Activated T-helper 1 cell treated with anti-CD3 and anti-CD28 coated beads, Interleukin-12 subunit alpha, Interleukin-12 subunit beta, Interleukin-2, Interleukin-4 antibody, amounts not matched to agents 30 ng/mL and 10 ng/mL and 1 ng/mL, durations not matched to agents 14 hours and 24 hours and 36 hours (primary cell): ENCODE measurements at regions of chr4 and their contacts with region 1.

Region 1: DNA sequence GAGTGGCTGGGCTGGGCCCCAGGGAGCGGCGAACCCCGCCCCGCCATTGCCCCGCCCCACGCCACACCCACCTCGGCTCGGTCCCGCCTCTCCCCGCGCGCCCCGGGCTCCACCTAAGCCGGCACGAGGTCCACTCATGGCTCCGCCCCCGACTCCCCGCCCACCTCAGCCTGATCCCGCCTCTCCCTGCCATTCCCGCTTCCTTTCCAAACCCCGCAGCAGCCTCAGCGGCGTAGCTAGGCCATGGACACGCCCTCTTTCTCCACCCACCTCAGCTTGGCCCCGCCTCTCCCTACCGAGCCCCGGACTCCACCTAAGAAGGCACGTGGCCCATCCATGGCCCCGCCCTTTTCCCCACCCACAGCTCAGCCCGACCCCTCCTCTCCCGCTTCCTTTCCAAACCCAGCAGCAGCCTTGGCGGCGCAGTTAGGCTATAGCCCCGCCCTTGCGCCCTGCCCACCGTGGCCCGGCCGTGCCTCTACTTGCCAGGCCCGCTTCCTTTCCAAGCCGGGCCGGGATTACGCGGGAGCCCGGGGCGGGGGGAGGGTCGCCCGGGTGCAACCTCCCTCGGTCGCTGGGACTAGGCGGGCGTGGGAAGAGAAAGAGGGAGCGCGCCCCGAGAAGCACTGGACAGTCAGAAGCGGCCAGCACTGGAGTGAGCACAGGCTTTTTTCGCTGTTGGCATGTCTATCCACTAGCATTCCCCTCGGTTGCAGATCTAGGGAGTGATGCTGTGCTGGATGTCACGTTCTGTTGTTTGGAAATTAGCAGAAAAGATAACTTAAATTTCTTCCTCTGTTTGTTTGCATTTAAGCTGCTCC is at the start of gene RELL1:
- DNase-seq: peak; percentile 99
- H3K4me3 Mint-ChIP-seq: peak within 1 kb of the TSS; percentile 96
- H3K27ac Mint-ChIP-seq: peak within 1 kb of the TSS; percentile 98
- H3K4me1 Mint-ChIP-seq: peaks cover 40% of the 10 kb centered on the region
- H3K27me3 Mint-ChIP-seq: peaks cover 7% of the 10 kb centered on the region
- total RNA-seq, gene RELL1: 21.0 and 21.4 TPM in 2 replicates

Region 2: DNA sequence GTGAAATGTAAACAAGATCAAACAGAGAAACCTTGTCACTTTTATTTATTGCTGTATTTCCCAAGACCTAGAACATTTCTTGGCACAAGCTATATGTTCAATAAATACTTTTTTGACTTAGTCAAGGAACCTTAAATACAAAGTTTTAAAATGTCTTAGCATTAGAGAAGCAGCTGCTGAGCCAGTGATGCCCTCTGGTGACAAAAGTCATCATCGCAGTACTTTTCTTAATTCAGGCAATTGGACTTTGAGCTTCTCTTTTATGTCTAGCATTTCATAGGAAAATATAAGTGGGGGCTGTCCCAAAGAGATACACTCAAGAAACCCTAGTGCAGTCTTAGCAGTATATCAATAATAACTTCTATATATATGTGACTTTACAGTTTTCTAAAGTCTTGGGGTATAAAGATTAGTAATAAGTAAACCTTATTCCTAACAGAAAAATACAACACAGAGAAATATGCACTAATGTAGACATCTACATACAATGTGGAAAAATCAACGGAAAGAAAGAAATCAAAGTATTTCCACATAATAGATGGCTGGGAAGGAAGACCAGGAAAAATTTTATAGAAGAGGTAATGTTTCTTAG is 1286.7 kb before region 1 on chr4:
- intact Hi-C with region 1: loop called (anchors 10 kb)
- DNase-seq: peak; percentile 15
- H3K4me3 Mint-ChIP-seq: no peak overlapping the region
- H3K27ac Mint-ChIP-seq: no peak overlapping the region
- H3K4me1 Mint-ChIP-seq: peaks cover 23% of the 10 kb centered on the region
- H3K27me3 Mint-ChIP-seq: peaks cover 9% of the 10 kb centered on the region

Region 3: DNA sequence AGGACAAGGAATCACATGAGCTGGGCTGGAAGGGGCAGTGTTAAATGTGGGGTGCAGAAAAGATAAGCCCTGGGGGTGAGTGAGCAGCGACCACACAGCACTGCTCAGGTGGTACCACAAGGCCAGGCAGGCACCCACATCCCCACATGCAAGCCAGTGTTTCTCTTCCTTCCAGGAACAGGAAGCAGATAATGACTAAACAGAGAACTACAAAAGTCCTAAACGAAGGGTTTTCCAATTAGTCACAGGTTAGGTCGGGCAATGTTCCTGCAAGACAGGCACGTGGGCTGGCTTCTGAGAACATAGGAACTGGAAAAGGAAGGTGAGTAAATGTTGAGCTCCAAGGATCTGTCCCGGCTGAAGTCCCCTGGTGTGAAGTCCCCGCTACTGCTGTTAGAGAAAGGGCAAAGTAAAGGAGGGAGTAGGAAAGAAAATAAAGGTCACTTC is 19.9 kb before region 1 on chr4:
- intact Hi-C with region 1: loop called (anchors 2 kb)
- DNase-seq: peak; percentile 10
- H3K4me3 Mint-ChIP-seq: peak overlapping the region; percentile 19
- H3K27ac Mint-ChIP-seq: peak overlapping the region; percentile 40
- H3K4me1 Mint-ChIP-seq: peaks cover 68% of the 10 kb centered on the region
- H3K27me3 Mint-ChIP-seq: no peaks in the 10 kb centered on the region

Region 4: GRCh38 chr4:37767546-37767945 is 81.0 kb after region 1 on chr4:
- intact Hi-C with region 1: loop called (anchors 2 kb)
- DNase-seq: no peak
- H3K4me3 Mint-ChIP-seq: no peak overlapping the region
- H3K27ac Mint-ChIP-seq: no peak overlapping the region
- H3K4me1 Mint-ChIP-seq: peaks cover 12% of the 10 kb centered on the region
- H3K27me3 Mint-ChIP-seq: no peaks in the 10 kb centered on the region

Region 5: DNA sequence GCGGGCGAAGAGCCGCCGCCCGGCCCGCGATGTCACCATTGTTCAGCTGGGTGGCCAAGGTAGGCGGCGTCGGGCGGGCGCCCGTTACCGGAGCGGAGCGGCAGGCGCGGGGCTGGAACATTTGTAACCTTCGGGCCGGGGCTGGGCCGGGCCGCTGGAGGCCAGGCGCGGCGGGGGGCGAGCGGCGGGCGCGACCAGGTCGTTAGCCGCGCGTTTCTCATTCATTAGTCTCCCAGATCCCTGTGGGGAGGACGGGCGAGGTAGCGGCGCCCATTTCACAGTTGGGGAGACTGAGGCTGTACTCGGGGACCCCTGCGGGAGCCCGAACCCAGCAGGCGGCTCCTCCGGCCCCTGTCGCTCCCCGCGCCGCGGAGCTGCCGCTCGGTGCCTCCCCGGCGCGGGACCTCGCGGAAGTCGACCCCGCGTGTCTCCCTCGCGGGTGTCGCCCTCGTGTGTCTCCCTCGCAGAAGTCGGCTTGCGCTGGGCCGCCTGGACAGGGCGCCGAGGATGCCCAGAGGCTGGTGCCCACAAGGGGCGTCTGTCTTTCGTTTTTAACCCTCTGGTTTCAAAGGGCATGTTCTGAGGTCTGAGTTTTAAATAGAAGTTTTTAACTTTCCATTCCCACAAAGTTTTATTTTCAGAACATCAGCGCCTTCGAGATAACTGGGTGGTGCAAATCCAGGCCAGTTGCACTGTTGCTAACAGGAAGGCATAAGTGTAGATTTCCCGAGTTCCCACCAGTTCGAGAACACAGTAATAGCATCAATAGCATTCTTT is 291.1 kb after region 1 on chr4:
- intact Hi-C with region 1: loop called (anchors 1 kb)
- DNase-seq: peak; percentile 70
- H3K4me3 Mint-ChIP-seq: peak overlapping the region; percentile 86
- H3K27ac Mint-ChIP-seq: peak overlapping the region; percentile 81
- H3K4me1 Mint-ChIP-seq: peaks cover 41% of the 10 kb centered on the region
- H3K27me3 Mint-ChIP-seq: no peaks in the 10 kb centered on the region

Region 6: GRCh38 chr4:39181905-39182638 is 1495.5 kb after region 1 on chr4 and contains the start of gene WDR19:
- intact Hi-C with region 1: loop called (anchors 5 kb)
- DNase-seq: peak; percentile 98
- H3K4me3 Mint-ChIP-seq: no peak within 1 kb of the TSS
- H3K27ac Mint-ChIP-seq: no peak within 1 kb of the TSS
- H3K4me1 Mint-ChIP-seq: no peaks in the 10 kb centered on the region
- H3K27me3 Mint-ChIP-seq: peaks cover 15% of the 10 kb centered on the region
- total RNA-seq, gene WDR19: 12.6 and 13.7 TPM in 2 replicates